ENCODE measurements at regions of chr17 and their contacts with region 1.

Region 1: DNA sequence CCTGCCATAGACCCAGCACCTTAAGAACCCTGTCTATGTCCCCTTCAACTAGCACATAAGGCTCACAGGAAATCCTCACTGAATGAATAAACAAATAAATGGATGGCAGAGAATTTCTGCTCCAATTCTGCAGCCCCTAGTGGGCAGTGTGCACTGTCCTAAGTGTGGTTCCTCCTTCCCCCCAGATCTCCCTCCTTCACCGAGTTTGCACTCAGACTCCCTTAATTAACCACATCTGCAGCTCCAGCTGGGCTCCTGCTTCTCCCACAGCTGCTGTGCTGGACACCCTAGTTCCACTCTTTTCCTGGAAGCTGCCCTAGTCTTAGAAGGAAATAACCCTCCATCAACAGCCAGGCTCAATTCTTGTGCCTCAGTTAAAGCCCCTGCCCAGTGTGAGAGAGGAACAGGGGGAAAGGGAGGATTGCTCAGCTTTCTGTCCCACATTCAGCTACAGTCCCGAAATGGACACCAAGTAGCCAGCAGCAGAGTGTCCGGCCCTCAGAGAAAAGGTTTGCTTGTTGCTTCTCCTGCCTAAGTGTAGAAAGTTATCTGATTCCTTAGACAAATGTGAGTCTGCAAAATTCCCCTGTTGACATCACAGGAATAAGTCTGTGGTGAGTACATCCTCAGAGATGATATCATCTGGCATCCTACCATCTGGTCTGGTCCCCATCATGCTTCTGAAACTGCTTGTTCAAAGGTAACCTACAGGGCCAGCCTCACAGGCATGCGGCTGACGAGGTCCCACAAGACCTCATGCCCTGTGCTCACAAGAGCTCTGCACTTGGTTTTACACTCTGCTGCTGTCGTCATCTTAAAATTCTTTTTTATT is 12.3 kb downstream of the LRRC3C start:
- DNase-seq: peak; percentile 62 to 66
- ATAC-seq: peak; percentile 73 to 87
- H3K4me3 ChIP-seq: no peak overlapping the region
- H3K27ac ChIP-seq: peak overlapping the region in 1 of 2 experiments; percentile 67; a peak in 3 of 6 replicates
- H3K4me1 ChIP-seq: peaks cover 11% of the 10 kb centered on the region
- CTCF ChIP-seq: peak; percentile 47
- EP300 ChIP-seq: no peak
- POLR2A ChIP-seq: no peak
- RAD21 ChIP-seq: peak; percentile 33 to 54; a peak in 3 of 5 replicates

Region 2: GRCh38 chr17:39927101-39927928 is 12.5 kb before region 1 on chr17 and contains the starts of genes LRRC3C and ORMDL3:
- CTCF ChIA-PET with region 1: interaction called, 18 read pairs
- POLR2A ChIA-PET with region 1: interaction called, 6 read pairs
- DNase-seq: peak; percentile 87 to 93
- ATAC-seq: peak; percentile 85 to 90
- H3K4me3 ChIP-seq: peak within 1 kb of the TSS; percentile 79
- H3K27ac ChIP-seq: peak within 1 kb of the TSS; percentile 79 to 93
- H3K4me1 ChIP-seq: peaks cover 41% of the 10 kb centered on the region
- CTCF ChIP-seq: no peak
- EP300 ChIP-seq: no peak
- POLR2A ChIP-seq: peak; percentile 80
- RAD21 ChIP-seq: no peak
- polyA plus RNA-seq, gene LRRC3C: not detected in 2 replicates
- polyA plus RNA-seq, gene ORMDL3: 26.9 and 49.0 TPM in 2 replicates

Region 3: DNA sequence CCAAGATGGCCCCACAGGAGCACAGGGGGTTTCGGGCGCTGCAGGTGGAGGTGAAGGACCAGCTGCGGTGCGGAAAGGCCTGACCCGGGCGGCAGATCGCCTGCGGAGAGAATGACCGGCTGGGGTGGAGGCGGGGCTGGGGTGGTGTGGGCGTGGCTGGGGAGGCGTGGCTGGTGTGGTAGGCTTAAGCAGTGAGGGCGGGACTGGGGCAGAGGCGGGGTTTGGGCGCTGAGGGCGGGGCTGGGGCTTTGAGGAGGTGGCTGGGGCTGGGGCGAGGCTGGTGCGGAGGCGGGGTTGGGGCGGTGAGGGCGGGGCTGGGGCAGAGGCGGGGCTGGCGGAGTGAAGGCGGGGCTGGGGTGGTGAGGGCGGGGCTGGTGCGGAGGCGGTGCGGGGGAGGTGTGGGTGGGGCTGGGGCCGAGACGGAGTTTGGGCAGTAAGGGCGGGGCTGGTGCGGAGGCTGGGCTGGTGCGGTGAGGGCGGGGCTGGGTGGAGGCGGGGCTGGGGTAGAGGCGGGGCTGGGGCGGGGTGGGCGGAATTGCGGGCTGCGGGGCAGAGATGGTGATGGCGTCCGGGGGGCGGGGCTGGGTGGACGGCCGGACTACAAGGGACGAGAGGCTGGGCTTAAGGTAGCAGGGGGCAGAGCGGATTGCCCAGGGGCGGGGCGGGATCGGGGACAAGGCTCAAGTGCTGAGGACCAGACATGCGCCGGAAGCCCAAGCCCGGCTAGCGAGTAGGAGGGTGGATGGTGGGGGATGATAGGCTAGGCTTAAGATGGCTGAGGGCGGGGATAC is 13.1 kb after region 1 on chr17:
- CTCF ChIA-PET with region 1: interaction called, 43 read pairs
- POLR2A ChIA-PET with region 1: interaction called, 5 read pairs
- DNase-seq: peak; percentile 97 to 98
- ATAC-seq: peak; percentile 87 to 97
- H3K4me3 ChIP-seq: peak overlapping the region; percentile 42
- H3K27ac ChIP-seq: peak overlapping the region; percentile 66 to 88
- H3K4me1 ChIP-seq: peaks cover 10% of the 10 kb centered on the region
- CTCF ChIP-seq: no peak
- EP300 ChIP-seq: no peak
- POLR2A ChIP-seq: peak; percentile 74
- RAD21 ChIP-seq: no peak

Region 4: DNA sequence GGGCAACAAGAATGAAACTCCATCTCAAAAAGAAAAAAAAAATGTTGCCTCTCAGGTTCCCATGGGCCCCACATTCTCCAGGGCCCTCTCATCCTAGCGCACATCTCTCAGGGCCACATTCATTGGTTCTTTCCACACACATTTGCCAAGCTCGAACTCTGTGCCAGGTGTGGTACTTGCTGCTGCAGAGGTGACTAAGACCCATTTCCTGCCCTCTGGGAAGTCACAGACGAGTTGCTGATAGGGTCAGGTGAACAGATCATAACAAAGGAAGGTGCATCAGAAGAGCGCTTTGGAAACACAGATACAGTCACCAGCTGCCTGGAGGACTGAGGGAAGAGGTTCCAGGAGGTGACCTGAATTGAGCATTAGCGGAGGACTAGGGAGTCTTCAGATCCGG is 24.0 kb after region 1 on chr17:
- CTCF ChIA-PET with region 1: interaction called, 26 read pairs
- POLR2A ChIA-PET with region 1: no interaction called
- DNase-seq: no peak
- ATAC-seq: no peak
- H3K4me3 ChIP-seq: no peak overlapping the region
- H3K27ac ChIP-seq: no peak overlapping the region
- H3K4me1 ChIP-seq: no peaks in the 10 kb centered on the region
- CTCF ChIP-seq: no peak
- EP300 ChIP-seq: no peak
- POLR2A ChIP-seq: no peak
- RAD21 ChIP-seq: no peak

Region 5: DNA sequence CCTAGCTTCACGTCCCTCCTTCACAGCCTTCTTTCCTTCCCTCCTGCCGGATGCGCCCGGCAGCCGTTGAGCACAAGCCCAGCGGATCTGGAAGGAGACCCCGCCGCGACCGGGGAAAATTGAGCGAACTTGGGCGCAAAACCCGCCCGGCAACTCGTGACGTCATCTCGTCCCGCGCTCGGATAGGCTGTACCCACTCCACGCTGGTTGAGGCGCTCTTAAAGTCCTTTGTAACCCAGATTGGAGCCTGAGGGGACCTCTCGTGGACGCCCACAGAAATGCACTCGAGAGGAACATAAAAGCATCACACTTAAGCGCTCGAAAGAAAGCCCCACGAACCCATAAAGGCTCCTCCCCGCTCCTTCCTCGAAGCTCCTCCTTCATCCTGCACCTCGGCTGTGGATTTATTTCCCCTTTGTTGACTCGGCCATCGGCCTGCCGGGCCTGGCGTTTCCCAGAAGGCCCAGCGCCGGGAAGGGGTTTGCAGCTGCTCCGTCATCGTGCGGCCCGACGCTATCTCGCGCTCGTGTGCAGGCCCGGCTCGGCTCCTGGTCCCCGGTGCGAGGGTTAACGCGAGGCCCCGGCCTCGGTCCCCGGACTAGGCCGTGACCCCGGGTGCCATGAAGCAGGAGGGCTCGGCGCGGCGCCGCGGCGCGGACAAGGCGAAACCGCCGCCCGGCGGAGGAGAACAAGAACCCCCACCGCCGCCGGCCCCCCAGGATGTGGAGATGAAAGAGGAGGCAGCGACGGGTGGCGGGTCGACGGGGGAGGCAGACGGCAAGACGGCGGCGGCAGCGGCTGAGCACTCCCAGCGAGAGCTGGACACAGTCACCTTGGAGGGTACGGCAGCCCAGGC is 40.8 kb after region 1 on chr17 and contains the start of gene PSMD3:
- CTCF ChIA-PET with region 1: interaction called, 12 read pairs
- POLR2A ChIA-PET with region 1: interaction called, 3 read pairs
- DNase-seq: peak; percentile 97 to 100
- ATAC-seq: peak; percentile 91 to 94
- H3K4me3 ChIP-seq: peak within 1 kb of the TSS; percentile 89
- H3K27ac ChIP-seq: peak within 1 kb of the TSS; percentile 93 to 95
- H3K4me1 ChIP-seq: peaks cover 20% of the 10 kb centered on the region
- CTCF ChIP-seq: peak; percentile 79
- EP300 ChIP-seq: no peak
- POLR2A ChIP-seq: peak; percentile 87
- RAD21 ChIP-seq: peak; percentile 79 to 85
- polyA plus RNA-seq, gene PSMD3: 87.7 and 113 TPM in 2 replicates